ENCODE measurements at regions of chr12 and their contacts with region 1.

Region 1: DNA sequence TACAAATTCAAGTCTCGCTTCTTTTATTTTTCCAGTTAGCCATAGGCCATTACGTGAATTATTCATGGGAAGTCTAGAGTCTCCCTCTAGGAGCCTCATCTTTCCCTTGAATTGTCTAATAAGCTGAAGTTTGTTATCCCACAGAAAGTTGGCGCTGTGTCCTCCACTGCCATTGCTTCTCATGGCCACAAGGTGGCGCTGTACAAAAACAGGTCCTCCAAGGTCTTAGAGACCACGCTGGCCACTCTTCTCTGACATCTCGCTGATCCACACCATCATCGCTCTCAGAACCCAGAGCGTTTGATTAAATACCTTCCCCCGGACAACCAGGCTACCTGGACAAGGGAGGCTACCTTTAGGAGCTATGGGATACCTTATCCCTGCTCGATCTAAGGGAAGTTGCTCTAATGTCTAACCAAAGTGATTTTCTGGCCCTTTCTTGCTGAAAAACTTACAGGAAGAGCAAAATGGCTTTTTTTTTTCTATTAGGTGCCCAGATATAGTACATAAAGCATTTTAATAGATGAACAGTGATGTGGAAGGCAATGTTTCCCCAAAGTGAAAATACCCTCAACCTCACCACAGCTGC is 110.0 kb downstream of the CCDC60 start:
- DNase-seq: peak; percentile 63
- H3K4me3 Mint-ChIP-seq: no peak overlapping the region
- H3K27ac Mint-ChIP-seq: no peak overlapping the region
- H3K4me1 Mint-ChIP-seq: no peaks in the 10 kb centered on the region
- H3K27me3 Mint-ChIP-seq: peaks cover 4% of the 10 kb centered on the region

Region 2: GRCh38 chr12:119406308-119406707 is 38.2 kb before region 1 on chr12:
- CTCF ChIA-PET with region 1: no interaction called
- DNase-seq: no peak
- H3K4me3 Mint-ChIP-seq: no peak overlapping the region
- H3K27ac Mint-ChIP-seq: no peak overlapping the region
- H3K4me1 Mint-ChIP-seq: no peaks in the 10 kb centered on the region
- H3K27me3 Mint-ChIP-seq: no peaks in the 10 kb centered on the region

Region 3: DNA sequence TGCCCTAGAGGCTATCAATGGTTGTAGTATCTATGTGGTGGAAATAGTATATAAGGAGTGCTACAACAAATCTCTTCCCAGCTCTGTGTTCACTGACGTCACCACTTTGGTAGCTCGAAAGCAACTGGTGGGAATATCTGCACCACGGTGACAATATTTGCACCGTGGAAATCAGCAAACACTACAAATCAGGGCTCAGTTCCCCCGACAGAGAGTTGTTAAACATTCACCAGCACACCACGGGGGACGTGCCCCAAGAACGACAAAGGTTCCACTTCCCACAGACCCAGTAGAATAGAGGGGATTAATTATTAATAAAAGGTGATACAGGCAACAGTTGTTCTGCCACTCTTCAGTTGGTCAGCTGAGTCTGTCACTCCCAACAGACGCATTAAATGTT is 11.6 kb before region 1 on chr12:
- CTCF ChIA-PET with region 1: interaction called, 17 read pairs
- DNase-seq: no peak
- H3K4me3 Mint-ChIP-seq: no peak overlapping the region
- H3K27ac Mint-ChIP-seq: no peak overlapping the region
- H3K4me1 Mint-ChIP-seq: no peaks in the 10 kb centered on the region
- H3K27me3 Mint-ChIP-seq: no peaks in the 10 kb centered on the region

Region 4: GRCh38 chr12:119544765-119545625 is 100.4 kb after region 1 on chr12:
- CTCF ChIA-PET with region 1: interaction called, 52 read pairs
- DNase-seq: peak; percentile 65
- H3K4me3 Mint-ChIP-seq: no peak overlapping the region
- H3K27ac Mint-ChIP-seq: no peak overlapping the region
- H3K4me1 Mint-ChIP-seq: no peaks in the 10 kb centered on the region
- H3K27me3 Mint-ChIP-seq: peaks cover 3% of the 10 kb centered on the region

Region 5: DNA sequence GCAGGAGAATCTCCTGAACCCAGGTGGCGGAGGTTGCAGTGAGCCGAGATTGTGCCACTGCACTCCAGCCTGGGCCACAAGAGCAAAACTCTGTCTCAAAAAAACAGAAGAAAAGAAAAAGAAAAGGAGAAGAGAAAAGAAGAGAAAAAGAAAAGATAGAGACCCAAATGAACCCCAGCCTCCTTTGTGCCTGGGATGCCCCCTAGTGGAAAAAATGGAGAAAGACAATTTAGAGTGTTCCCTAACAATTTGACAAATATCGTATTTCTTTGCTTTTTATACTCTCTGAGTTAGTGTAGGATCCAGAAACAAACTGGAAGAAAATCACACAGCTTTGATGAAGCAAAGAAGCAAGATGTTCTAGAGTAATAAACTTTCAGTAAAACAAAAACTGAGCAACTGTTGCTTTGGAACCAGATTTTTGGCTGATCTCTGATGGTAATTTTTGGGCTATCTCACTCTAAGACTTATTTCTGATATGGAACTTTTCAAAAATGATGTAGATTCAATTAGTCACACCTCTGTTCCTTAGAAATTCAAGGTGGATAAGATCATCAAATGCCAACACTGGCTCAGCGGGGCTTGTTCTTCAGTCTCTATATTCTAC is 204.8 kb after region 1 on chr12:
- CTCF ChIA-PET with region 1: interaction called, 19 read pairs
- DNase-seq: no peak
- H3K4me3 Mint-ChIP-seq: no peak overlapping the region
- H3K27ac Mint-ChIP-seq: no peak overlapping the region
- H3K4me1 Mint-ChIP-seq: no peaks in the 10 kb centered on the region
- H3K27me3 Mint-ChIP-seq: peaks cover 11% of the 10 kb centered on the region

Region 6: DNA sequence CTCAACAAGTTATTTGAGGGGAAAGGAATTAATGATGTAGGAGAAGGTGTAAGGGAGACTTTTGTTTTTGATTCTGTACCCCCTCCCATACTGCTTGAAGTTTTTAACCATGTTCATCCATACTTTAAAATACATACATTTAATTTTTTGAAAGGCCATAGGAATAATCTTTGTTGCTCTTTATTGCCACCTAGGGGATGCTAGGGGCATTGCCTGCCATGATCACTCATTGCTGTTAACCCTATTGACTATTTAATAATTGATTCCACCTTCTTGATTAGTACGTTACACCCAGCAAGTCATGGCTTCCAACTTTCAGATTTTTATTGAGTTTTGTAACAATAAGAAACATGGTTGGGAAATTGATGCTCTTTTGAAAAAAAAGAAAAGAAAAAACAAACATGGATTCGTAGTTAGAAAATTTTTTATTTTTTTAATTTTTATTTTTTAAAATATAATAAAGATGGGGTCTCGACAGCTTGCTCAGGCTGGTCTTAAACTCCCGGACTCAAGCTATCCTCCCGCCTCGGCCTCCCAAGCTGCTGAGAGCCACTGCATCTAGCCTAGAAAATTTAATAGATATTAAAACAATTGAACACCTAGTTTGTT is 214.8 kb after region 1 on chr12:
- CTCF ChIA-PET with region 1: interaction called, 16 read pairs
- DNase-seq: peak; percentile 60
- H3K4me3 Mint-ChIP-seq: no peak overlapping the region
- H3K27ac Mint-ChIP-seq: no peak overlapping the region
- H3K4me1 Mint-ChIP-seq: peaks cover 7% of the 10 kb centered on the region
- H3K27me3 Mint-ChIP-seq: peaks cover 10% of the 10 kb centered on the region

Measured in activated naive CD4-positive, alpha-beta T cell treated with anti-CD3 and anti-CD28 coated beads, Interleukin-2, amount 10 ng/mL, durations not matched to agents 7 days and 5 days (primary cell).